Gastrocnemius medialis (tissue), 4 donors: ENCODE measurements at regions of chr9 and their contacts with region 1.

Region 1: DNA sequence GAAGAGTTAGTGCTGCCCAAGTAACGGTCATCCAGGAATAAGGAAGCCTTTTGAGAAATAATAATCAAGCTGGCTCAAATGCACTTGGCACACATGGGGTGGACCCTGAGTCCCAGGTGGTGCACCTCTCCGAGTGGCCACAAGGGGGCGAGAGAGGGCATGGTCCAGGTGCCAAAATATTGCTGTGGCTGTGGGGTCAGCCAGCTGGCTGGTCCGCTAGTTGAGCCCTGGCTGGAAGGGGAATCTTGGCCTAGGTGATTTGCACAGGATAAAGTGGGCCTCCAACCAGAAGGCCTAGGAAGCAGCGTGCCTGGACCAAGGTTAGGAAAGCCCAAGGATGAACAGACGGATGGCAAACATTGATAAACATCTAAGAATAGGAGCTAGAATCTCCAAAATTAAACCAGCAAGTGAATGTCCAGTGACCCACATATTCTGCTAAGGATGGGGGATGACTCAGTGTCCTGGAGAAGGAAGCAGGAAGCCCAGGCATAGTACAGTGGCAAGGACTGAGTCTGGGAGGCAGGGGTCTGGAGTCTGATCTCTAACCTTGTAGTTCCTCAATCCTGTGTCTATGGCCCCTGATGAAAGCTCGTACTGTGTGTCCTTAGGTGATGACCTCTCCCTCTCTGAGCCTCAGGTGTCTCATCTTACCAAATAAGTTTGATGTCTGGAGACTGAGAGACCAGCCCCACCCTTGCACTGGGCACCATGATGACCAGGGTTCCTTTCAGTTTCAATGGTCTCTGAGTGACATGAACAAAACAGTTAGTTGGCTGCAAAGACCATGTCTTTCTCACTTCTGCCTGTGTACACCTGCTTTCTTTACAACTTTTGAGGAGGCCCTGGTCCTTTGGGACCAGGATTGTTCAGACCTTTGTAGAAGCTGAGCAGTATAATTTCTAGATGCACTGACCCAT is 19.2 kb upstream of the SHB start:
- DNase-seq: peak; percentile 23 to 64
- ATAC-seq: peak; percentile 85 to 89
- H3K4me3 ChIP-seq: no peak overlapping the region
- H3K27ac ChIP-seq: peak overlapping the region in 2 of 4 donors; percentile 36 to 42
- H3K4me1 ChIP-seq: peaks cover 8 to 9% of the 10 kb centered on the region in 2 donors
- H3K27me3 ChIP-seq: no peaks in the 10 kb centered on the region
- CTCF ChIP-seq: peak; percentile 87 to 95 (median 90)
- POLR2A ChIP-seq: no peak

Region 2: GRCh38 chr9:38371495-38371894 is 283.2 kb after region 1 on chr9:
- in situ Hi-C with region 1: loop called in 1 of 4 experiments (anchors 10 kb)
- intact Hi-C with region 1: no loop called
- DNase-seq: peak in 1 of 2 donors; percentile 17
- ATAC-seq: peak; percentile 87 to 92
- H3K4me3 ChIP-seq: no peak overlapping the region
- H3K27ac ChIP-seq: no peak overlapping the region
- H3K4me1 ChIP-seq: no peaks in the 10 kb centered on the region
- H3K27me3 ChIP-seq: no peaks in the 10 kb centered on the region
- CTCF ChIP-seq: peak in 4 of 5 experiments; percentile 28 to 48 (median 41)
- POLR2A ChIP-seq: no peak

Region 3: DNA sequence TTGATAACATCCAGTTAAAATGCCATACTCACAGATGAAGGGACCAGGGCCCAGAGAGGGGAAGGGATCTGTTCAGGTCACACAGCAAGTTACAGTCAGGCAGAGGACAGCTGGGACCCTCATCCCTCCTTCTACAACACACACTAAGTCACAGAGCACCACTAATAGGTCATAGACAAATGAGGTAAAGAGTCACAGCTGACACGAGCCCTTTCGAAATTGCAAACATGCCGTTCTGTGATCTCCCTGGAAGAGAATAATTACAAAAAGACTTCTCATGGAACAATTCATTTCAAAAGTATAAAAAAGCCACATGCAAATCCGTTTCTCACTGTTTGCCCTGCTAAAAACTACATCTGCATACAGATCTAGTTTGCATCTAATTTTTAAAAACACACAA is 320.5 kb after region 1 on chr9:
- in situ Hi-C with region 1: loop called in 1 of 4 experiments (anchors 10 kb)
- intact Hi-C with region 1: no loop called
- DNase-seq: no peak
- ATAC-seq: no peak
- H3K4me3 ChIP-seq: no peak overlapping the region
- H3K27ac ChIP-seq: no peak overlapping the region
- H3K4me1 ChIP-seq: no peaks in the 10 kb centered on the region
- H3K27me3 ChIP-seq: peaks cover 8 to 16% (median 10%) of the 10 kb centered on the region in 3 donors
- CTCF ChIP-seq: no peak
- POLR2A ChIP-seq: no peak